Body of pancreas (tissue), 4 donors: ENCODE measurements at regions of chr9 and their contacts with region 1.

Region 1: GRCh38 chr9:88578121-88579054 is 43.4 kb downstream of the NXNL2 start:
- DNase-seq: peak; percentile 79 to 86 (median 84)
- ATAC-seq: peak; percentile 91
- H3K4me3 ChIP-seq: no peak overlapping the region
- H3K27ac ChIP-seq: no peak overlapping the region
- H3K4me1 ChIP-seq: peaks cover 4% of the 10 kb centered on the region
- H3K27me3 ChIP-seq: no peaks in the 10 kb centered on the region
- CTCF ChIP-seq: peak; percentile 88 to 99 (median 92)
- POLR2A ChIP-seq: no peak

Region 2: DNA sequence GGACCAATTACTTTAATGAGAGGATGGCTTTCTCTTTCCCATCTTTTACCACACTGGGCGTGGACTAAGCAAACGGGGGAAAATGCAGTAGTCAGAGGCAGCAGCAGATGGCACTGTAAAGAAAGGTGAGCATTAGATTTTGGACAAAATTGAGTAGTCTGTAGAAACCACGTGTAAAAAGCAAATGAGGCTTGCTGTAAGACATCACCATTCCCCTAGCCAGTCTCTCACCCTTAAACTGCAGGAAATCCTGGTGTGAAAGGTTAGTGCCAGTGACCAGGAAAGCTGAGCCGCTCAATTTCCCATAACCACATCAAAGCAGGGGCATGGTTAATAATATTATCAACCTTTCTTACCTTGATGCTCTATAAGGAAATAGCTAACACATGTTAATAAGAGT is 471.9 kb before region 1 on chr9:
- intact Hi-C with region 1: loop called (anchors 5 kb)
- DNase-seq: peak; percentile 31 to 57 (median 50)
- ATAC-seq: peak; percentile 86
- H3K4me3 ChIP-seq: no peak overlapping the region
- H3K27ac ChIP-seq: no peak overlapping the region
- H3K4me1 ChIP-seq: no peaks in the 10 kb centered on the region
- H3K27me3 ChIP-seq: no peaks in the 10 kb centered on the region
- CTCF ChIP-seq: peak; percentile 43 to 75 (median 69)
- POLR2A ChIP-seq: no peak

Region 3: GRCh38 chr9:88433583-88434255 is 144.7 kb before region 1 on chr9:
- intact Hi-C with region 1: no loop called
- DNase-seq: no peak
- ATAC-seq: no peak
- H3K4me3 ChIP-seq: no peak overlapping the region
- H3K27ac ChIP-seq: no peak overlapping the region
- H3K4me1 ChIP-seq: peaks cover 15% of the 10 kb centered on the region
- H3K27me3 ChIP-seq: no peaks in the 10 kb centered on the region
- CTCF ChIP-seq: no peak
- POLR2A ChIP-seq: no peak